ENCODE measurements at regions of chr12 and their contacts with region 1.

Region 1: DNA sequence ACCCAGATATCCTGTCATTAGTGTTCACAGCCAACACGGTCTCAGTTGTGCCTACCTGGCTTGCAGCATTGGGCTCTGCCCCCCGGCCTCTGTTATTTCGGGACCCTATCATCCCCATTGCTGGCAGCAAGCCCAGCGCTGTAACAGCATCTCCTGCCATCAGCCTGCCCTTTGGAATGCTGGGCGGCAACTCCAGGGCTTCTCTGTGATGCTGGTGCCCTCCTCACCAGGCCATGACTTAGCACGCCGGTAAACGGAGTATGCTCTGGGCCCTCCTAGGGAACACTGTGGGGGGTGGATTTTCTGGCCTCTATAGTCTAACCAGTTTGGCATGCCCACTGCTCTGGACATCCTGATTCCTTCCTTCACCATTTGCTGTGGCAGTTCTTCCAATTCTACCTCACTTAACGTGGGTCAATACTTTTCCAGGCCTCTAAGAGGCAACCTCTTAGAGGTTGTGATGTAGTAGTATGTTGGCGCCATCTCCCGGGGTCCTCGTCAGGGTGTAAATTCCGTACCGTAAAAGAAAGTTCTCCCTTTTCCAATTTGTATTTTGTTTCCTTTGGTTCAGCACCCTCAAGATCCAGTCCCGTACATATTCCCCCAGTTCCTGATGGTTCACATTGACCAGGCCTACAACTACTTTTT is 80.0 kb downstream of the SINHCAF start:
- DNase-seq: no peak
- H3K4me3 ChIP-seq: no peak overlapping the region
- H3K27ac ChIP-seq: no peak overlapping the region
- H3K4me1 ChIP-seq: no peaks in the 10 kb centered on the region
- H3K27me3 ChIP-seq: peaks cover 0 to 3% of the 10 kb centered on the region in 2 experiments
- CTCF ChIP-seq: no peak
- POLR2A ChIP-seq: no peak

Region 2: DNA sequence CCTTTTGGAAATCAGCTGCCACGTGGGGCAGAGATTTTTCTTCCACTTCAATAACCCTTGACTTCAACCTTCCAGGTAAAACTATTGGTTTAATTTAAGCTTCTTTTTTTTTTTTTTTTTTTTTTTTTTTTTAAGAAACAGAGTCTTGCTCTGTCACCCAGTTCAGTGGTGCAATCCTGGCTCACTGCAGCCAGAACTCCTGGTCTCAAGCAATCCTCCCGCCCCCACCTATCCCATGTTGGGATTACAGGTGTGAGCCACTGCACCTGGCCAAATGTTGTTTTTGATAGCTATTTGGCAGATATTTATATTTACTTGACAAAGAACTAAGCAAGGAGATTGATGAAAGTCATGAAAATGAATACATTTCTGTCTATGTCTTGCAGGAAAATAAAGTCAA is 14.9 kb after region 1 on chr12:
- CTCF ChIA-PET with region 1: interaction called, 17 read pairs
- POLR2A ChIA-PET with region 1: no interaction called
- dilution Hi-C with region 1: no loop called
- intact Hi-C with region 1: no loop called
- DNase-seq: no peak
- H3K4me3 ChIP-seq: no peak overlapping the region
- H3K27ac ChIP-seq: no peak overlapping the region
- H3K4me1 ChIP-seq: no peaks in the 10 kb centered on the region
- H3K27me3 ChIP-seq: no peaks in the 10 kb centered on the region
- CTCF ChIP-seq: no peak
- POLR2A ChIP-seq: no peak

Region 3: DNA sequence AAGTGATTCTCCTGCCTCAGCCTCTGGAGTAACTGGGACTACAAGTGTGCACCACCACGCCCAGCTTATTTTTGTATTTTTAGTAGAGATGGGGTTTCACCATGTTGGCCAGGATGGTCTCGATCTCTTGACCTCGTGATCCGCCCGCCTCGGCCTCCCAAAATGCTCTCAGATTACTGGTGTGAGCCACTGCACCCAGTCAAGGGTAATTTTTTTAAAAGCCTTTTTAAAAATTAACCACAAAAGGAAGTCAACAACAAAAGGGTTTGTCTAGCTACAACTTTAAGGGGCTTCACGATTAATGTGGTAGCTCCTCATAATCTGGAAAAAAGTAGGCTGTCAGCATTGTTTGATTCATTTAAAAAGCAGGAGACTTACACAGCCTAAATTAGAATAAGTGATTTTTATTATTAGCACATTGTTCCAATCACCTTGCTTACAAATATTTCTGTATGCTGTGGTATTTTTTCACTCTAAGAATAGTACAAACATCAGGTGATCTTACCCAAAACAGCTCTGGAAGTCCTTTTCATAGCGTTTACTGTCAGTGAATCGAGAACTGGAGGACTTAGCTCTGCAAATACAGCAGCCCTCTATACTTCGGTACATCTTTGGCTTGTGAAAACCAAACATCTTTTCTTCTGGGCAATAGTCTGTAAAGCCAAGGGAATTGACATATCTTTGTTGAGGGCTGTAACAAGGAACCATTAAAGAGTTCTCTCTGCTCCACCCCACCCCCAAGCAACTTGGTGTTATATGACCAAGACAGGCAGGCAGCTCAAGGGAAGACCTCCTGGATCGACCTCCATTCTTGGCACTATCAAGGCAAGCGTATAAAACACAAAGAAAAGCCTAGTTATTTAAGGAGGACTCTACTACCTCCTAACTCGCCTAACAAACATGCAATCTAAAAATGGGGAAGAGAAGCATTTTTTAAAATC is 51.9 kb after region 1 on chr12:
- CTCF ChIA-PET with region 1: no interaction called
- POLR2A ChIA-PET with region 1: no interaction called
- dilution Hi-C with region 1: no loop called
- intact Hi-C with region 1: no loop called
- DNase-seq: no peak
- H3K4me3 ChIP-seq: no peak overlapping the region
- H3K27ac ChIP-seq: no peak overlapping the region
- H3K4me1 ChIP-seq: no peaks in the 10 kb centered on the region
- H3K27me3 ChIP-seq: no peaks in the 10 kb centered on the region
- CTCF ChIP-seq: no peak
- POLR2A ChIP-seq: no peak